Uterus (tissue), 4 donors: ENCODE measurements at regions of chr5 and their contacts with region 1.

Region 1: GRCh38 chr5:4079831-4080230 is 484.2 kb downstream of the IRX1 start:
- DNase-seq: no peak
- H3K4me3 ChIP-seq: no peak overlapping the region
- H3K27ac ChIP-seq: no peak overlapping the region
- H3K4me1 ChIP-seq: no peaks in the 10 kb centered on the region
- H3K27me3 ChIP-seq: no peaks in the 10 kb centered on the region
- CTCF ChIP-seq: no peak
- POLR2A ChIP-seq: no peak

Region 2: DNA sequence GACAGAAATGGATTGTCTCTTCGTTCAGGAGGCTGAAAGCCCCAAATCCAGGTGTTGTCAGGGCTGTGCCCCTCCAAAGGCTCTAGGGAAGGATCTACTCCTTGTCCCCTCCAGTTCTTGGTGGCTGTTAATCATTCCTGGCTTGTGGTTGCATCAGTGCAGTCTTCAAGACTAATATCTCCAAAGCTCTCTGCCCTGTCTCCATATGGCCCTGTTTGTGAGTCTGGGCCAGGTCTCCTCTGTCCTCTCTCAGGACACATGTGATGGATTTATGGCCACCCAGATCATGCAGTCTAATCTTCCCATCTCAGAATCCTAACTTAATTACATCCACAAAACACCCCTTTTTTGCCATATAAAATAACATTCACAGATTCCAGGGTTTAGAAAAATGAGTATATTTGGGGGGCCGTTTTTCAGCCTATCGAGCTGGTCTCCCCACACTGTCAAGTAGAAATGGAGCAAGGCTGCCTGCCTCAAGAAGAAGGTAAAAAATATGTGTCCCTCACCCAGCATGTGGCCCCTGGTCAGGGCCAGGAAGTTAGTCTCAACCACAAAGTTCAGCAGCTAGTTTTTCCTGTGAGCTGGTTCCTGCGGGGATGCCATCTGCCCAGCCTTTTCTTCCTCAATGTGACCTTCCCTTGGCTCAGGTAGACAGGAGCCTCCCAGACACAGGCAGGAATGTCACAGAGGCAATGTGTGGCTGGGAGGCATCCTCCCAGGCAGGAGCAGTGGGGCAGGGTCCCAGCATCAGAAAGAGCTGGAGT is 25.2 kb after region 1 on chr5:
- intact Hi-C with region 1: loop called (anchors 2 kb)
- DNase-seq: no peak
- H3K4me3 ChIP-seq: no peak overlapping the region
- H3K27ac ChIP-seq: no peak overlapping the region
- H3K4me1 ChIP-seq: no peaks in the 10 kb centered on the region
- H3K27me3 ChIP-seq: no peaks in the 10 kb centered on the region
- CTCF ChIP-seq: no peak
- POLR2A ChIP-seq: no peak